ENCODE measurements at regions of chr4 and their contacts with region 1.

Region 1: GRCh38 chr4:53908661-53909078 is 155.7 kb downstream of the CHIC2 start:
- DNase-seq: peak; percentile 79
- H3K4me3 ChIP-seq: peak overlapping the region; percentile 28
- CTCF ChIP-seq: peak; percentile 65

Region 2: GRCh38 chr4:53702334-53703266 is 206.1 kb before region 1 on chr4:
- CTCF ChIA-PET with region 1: interaction called, 53 read pairs
- POLR2A ChIA-PET with region 1: interaction called, 6 read pairs
- DNase-seq: no peak
- H3K4me3 ChIP-seq: peak overlapping the region; percentile 3; the same call in 1 of the 2 replicates
- CTCF ChIP-seq: no peak

Region 3: GRCh38 chr4:53920116-53920515 is 11.4 kb after region 1 on chr4:
- CTCF ChIA-PET with region 1: interaction called, 21 read pairs
- POLR2A ChIA-PET with region 1: interaction called, 4 read pairs
- DNase-seq: no peak
- H3K4me3 ChIP-seq: no peak overlapping the region
- CTCF ChIP-seq: no peak

Region 4: DNA sequence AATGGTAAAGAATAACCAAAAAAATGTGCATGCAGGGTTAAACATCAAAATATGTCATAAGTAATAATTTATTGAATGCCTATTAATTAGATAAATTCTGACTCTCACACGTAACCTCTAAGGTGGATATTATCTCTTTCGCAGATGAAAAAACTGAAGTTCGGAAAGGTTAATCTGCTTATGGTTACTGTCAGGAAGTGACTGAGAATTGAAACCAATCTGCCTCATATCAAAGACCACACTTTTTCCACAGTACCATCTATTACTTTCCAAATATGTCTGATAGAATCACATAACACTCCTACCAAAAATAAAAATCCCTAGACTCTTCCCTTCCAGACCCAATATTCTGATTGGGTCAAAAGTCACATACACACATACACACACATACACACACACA is 149.5 kb after region 1 on chr4:
- CTCF ChIA-PET with region 1: interaction called, 10 read pairs
- POLR2A ChIA-PET with region 1: no interaction called
- DNase-seq: no peak
- H3K4me3 ChIP-seq: no peak overlapping the region
- CTCF ChIP-seq: no peak

Region 5: GRCh38 chr4:54228056-54228527 is 319.4 kb after region 1 on chr4:
- CTCF ChIA-PET with region 1: interaction called, 196 read pairs
- POLR2A ChIA-PET with region 1: interaction called, 20 read pairs
- DNase-seq: no peak
- H3K4me3 ChIP-seq: peak overlapping the region; percentile 93
- CTCF ChIP-seq: peak; percentile 97